Motor neuron (in vitro differentiated cells): ENCODE measurements at regions of chr12 and their contacts with region 1.

Region 1: DNA sequence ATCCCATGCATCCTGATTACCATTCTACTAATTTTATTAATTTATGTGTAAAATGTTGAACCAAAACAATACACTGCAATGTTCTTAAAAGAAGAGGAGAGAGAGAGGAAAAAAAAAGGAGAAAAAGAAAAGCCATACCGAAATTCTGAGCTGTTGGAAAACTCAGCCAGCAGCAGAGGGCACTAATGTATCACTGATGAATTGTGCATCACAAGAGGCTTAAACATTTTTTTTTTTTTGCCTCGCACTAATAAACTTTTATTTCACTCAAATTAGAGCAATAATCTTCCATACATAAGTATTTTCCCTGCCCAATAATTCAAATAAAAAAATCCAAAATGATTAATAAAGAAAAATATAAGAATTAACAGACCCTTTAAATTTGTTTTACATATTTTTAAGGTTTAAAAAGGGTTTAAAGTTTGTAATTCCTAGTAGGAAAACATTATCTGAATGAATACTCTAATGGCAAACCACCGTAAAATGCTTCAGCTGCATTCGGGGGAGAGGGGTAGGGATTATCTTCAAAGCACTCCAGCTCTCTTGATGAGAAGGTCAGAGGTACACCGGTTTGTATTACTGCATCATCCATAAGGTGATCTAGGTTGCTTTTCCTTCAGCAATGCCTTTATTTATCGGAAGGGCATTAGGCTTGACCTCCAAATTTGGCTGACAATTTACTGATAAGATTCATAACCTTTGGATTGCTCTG is 41.9 kb downstream of the ATP23 start:
- ATAC-seq: peak in 1 of 8 experiments; percentile 23
- H3K4me3 ChIP-seq: no peak overlapping the region
- H3K27ac ChIP-seq: no peak overlapping the region
- H3K4me1 ChIP-seq: no peaks in the 10 kb centered on the region

Region 2: GRCh38 chr12:57803319-57803893 is 179.9 kb before region 1 on chr12:
- in situ Hi-C with region 1: no loop called
- ATAC-seq: peak; percentile 40 to 85 (median 58)
- H3K4me3 ChIP-seq: no peak overlapping the region
- H3K27ac ChIP-seq: no peak overlapping the region
- H3K4me1 ChIP-seq: no peaks in the 10 kb centered on the region

Region 3: GRCh38 chr12:58087428-58088127 is 104.3 kb after region 1 on chr12:
- in situ Hi-C with region 1: no loop called
- ATAC-seq: no peak
- H3K4me3 ChIP-seq: no peak overlapping the region
- H3K27ac ChIP-seq: no peak overlapping the region
- H3K4me1 ChIP-seq: no peaks in the 10 kb centered on the region

Region 4: DNA sequence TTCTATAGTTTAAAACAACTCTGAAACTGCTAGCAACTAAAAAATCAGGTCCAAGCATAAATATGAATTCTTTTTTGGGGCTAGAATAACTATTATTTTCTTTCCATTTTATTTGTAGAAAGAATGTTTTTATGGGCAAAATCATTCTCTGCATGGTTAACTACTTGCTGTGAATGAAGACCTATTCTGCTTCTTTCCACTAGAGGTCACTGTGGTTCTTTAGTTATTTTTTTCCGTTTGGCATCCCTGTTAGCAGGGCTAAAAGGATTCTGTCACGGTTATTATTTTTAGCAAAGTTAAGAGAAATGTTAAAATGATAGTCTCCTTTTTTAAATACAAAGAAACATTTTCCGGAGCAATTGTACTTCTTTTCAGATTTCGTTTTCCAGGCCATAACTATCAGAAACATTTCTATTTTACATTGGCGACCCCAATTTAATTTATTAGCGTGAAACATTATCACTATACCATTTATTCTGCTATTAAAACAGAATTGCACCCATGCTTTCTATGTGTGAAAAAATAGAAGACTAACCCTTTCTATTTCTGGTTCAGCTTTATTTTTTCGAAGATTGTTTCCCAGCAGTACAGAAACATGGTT is 362.8 kb after region 1 on chr12:
- in situ Hi-C with region 1: loop called in 1 of 9 experiments (anchors 25 kb)
- ATAC-seq: peak in 5 of 8 experiments; percentile 65 to 80 (median 74)
- H3K4me3 ChIP-seq: no peak overlapping the region
- H3K27ac ChIP-seq: no peak overlapping the region
- H3K4me1 ChIP-seq: no peaks in the 10 kb centered on the region

Region 5: GRCh38 chr12:58487678-58488161 is 504.4 kb after region 1 on chr12:
- in situ Hi-C with region 1: no loop called
- ATAC-seq: peak in 3 of 8 experiments; percentile 25 to 30 (median 29)
- H3K4me3 ChIP-seq: no peak overlapping the region
- H3K27ac ChIP-seq: no peak overlapping the region
- H3K4me1 ChIP-seq: peaks cover 6 to 8% of the 10 kb centered on the region in 2 donors